CD14-positive monocyte (primary cell): ENCODE measurements at regions of chr1 and their contacts with region 1.

Region 1: GRCh38 chr1:152034646-152035405 is 2.0 kb downstream of the S100A11 start:
- DNase-seq: peak; percentile 68 to 80 (median 79)
- H3K4me3 ChIP-seq: peak overlapping the region; percentile 95 to 100 (median 100)
- H3K4me3 Mint-ChIP-seq: peak overlapping the region; percentile 95 to 98
- H3K27ac ChIP-seq: peak overlapping the region; percentile 98 to 99
- H3K27ac Mint-ChIP-seq: no peak overlapping the region
- H3K4me1 ChIP-seq: peaks cover 83 to 87% of the 10 kb centered on the region in 2 donors
- H3K4me1 Mint-ChIP-seq: peaks cover 44% of the 10 kb centered on the region
- H3K27me3 ChIP-seq: no peaks in the 10 kb centered on the region
- H3K27me3 Mint-ChIP-seq: peaks cover 0 to 4% (median 2%) of the 10 kb centered on the region in 3 donors
- CTCF ChIP-seq: peak; percentile 91

Region 2: DNA sequence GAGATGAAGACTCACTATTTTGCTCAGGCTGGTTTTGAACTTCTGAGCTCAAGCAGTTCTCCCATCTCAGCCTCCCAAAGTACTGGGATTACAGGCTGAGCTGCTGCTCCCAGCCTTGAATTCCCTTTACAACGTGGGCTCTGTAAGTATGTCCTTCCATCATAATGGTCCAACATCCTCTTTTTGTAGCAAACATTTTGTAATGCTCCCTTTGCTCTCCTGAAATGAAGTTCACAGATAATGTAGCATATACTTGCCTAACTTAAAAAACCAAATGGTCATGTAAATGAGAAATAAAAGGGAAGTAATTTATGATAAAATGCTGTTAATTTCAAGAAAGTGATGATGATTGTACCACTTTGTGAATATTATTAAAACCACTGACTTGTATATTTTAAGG is 95.0 kb before region 1 on chr1:
- intact Hi-C with region 1: loop called in 1 of 2 experiments (anchors 2 kb)
- DNase-seq: peak; percentile 58 to 76 (median 59)
- H3K4me3 ChIP-seq: no peak overlapping the region
- H3K4me3 Mint-ChIP-seq: no peak overlapping the region
- H3K27ac ChIP-seq: peak overlapping the region; percentile 34 to 85
- H3K27ac Mint-ChIP-seq: peak overlapping the region; percentile 88 to 100 (median 99)
- H3K4me1 ChIP-seq: peaks cover 32 to 47% of the 10 kb centered on the region in 2 donors
- H3K4me1 Mint-ChIP-seq: peaks cover 49% of the 10 kb centered on the region
- H3K27me3 ChIP-seq: no peaks in the 10 kb centered on the region
- H3K27me3 Mint-ChIP-seq: peaks cover 0 to 15% (median 0%) of the 10 kb centered on the region in 3 donors
- CTCF ChIP-seq: no peak